ENCODE measurements at regions of chr19 and their contacts with region 1.

Region 1: GRCh38 chr19:8526345-8527067 is 12.5 kb upstream of the ZNF414 start:
- DNase-seq: peak; percentile 51
- H3K4me3 ChIP-seq: peak overlapping the region; percentile 95
- CTCF ChIP-seq: no peak

Region 2: DNA sequence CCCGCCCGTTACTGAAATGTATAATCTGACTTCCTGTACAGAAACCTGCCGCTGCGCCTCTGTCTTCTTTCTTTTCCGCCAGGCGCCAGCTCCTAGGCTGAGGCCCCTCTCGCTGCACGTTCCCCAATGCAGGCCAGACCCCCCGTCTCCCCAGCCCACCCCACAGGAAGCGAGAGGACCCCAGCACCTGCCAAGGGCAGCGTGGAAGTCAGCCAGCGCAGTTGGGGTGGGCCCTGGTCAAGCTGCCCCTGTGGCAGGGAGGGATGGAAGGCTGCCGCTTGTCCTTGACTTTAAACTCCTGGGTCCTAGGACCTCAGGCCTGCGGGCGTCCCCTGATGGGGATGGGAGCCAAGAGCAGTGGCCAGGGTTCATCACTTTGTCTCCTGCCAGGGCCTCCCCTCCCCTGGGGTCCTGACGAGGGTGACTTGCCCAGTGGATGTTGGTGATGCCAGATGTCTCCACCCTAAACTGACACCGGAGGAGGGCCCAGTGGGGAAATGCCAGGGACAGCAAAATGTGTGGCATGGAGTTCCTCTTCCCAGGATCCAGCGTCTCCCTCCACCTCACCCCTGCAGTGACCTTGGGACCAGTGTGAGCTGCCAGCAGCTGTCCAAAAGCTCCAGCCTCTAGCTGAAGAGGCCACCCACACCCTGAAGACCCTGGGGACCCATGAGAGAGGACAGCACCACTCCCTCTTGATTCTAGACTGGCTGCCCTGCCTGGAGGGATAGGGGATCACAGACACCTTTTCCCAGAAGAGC is 121.9 kb before region 1 on chr19:
- CTCF ChIA-PET with region 1: no interaction called
- POLR2A ChIA-PET with region 1: no interaction called
- DNase-seq: no peak
- H3K4me3 ChIP-seq: no peak overlapping the region
- CTCF ChIP-seq: no peak

Region 3: DNA sequence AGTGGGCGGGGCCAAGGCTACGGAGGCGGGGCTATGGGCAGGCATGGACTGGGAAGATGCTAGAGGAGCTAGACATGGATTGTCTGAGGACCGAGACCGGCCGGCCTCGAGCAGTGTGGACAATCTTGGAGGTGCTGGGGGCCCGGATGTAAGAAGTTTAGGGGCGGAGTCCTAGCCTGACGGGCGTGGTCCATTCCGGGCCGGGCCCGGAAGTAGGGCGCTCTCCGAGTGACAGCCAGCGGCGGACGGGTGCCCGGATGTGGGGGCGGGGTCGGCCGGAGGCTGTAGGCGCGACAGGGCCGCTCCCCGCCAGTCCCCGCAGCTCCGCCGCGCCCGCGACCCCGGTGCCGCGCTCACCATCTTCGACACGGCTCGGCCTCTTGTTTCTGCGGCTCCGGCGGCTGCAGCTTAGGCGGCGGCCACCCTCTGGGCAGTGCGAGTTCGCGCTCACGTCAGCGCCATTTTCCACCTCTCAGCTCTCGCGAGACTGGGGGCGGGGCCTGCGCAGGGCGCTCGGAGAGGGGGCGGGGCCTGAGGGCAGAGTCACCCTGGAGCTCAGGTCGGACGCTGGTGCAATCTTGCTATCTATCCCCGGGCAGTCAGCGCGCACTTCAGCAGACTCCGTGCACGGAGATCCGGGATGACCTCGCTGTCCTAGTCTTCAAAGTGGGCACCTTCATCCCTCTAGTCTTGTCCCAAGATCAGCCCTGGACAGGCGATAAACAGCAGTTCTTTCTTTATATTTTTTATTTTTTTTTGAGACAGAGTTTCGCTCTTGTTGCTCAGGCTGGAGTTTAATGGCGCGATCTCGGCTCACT is 12.6 kb before region 1 on chr19 and contains the start of gene ZNF414:
- CTCF ChIA-PET with region 1: interaction called, 8 read pairs
- POLR2A ChIA-PET with region 1: interaction called, 22 read pairs
- DNase-seq: peak; percentile 84
- H3K4me3 ChIP-seq: peak within 1 kb of the TSS; percentile 79
- CTCF ChIP-seq: no peak

Region 4: GRCh38 chr19:8544168-8544567 is 17.7 kb after region 1 on chr19:
- CTCF ChIA-PET with region 1: no interaction called
- POLR2A ChIA-PET with region 1: no interaction called
- DNase-seq: no peak
- H3K4me3 ChIP-seq: no peak overlapping the region
- CTCF ChIP-seq: no peak

Measured in AG04449 (cell line).